Right lobe of liver (tissue), 6 donors: ENCODE measurements at regions of chr1 and their contacts with region 1.

Region 1: GRCh38 chr1:205273551-205273982 is 45.8 kb downstream of the TMCC2 start:
- DNase-seq: peak; percentile 84 to 89 (median 86)
- ATAC-seq: peak; percentile 91 to 95 (median 94)
- H3K4me3 ChIP-seq: no peak overlapping the region
- H3K27ac ChIP-seq: no peak overlapping the region
- H3K4me1 ChIP-seq: no peaks in the 10 kb centered on the region
- H3K27me3 ChIP-seq: no peaks in the 10 kb centered on the region
- CTCF ChIP-seq: peak; percentile 97 to 99 (median 98)
- POLR2A ChIP-seq: no peak

Region 2: GRCh38 chr1:205227584-205228006 is 46.0 kb before region 1 on chr1 and contains the start of gene TMCC2:
- intact Hi-C with region 1: no loop called
- DNase-seq: peak; percentile 75 to 84 (median 82)
- ATAC-seq: peak; percentile 89 to 92 (median 92)
- H3K4me3 ChIP-seq: peak within 1 kb of the TSS; percentile 34 to 52 (median 51)
- H3K27ac ChIP-seq: no peak within 1 kb of the TSS
- H3K4me1 ChIP-seq: peaks cover 0 to 9% (median 0%) of the 10 kb centered on the region in 4 donors
- H3K27me3 ChIP-seq: no peaks in the 10 kb centered on the region
- CTCF ChIP-seq: no peak
- POLR2A ChIP-seq: no peak
- total RNA-seq, gene TMCC2: 0.14 to 5.9 (median 0.30) TPM

Region 3: GRCh38 chr1:205313563-205314308 is 40.2 kb after region 1 on chr1:
- intact Hi-C with region 1: loop called in 1 of 2 experiments (anchors 5 kb)
- DNase-seq: peak in 2 of 3 donors; percentile 43 to 66
- ATAC-seq: peak; percentile 19 to 37 (median 28)
- H3K4me3 ChIP-seq: peak overlapping the region in 1 of 3 donors; percentile 1
- H3K27ac ChIP-seq: peak overlapping the region in 2 of 3 donors; percentile 66 to 70
- H3K4me1 ChIP-seq: peaks cover 0 to 77% (median 18%) of the 10 kb centered on the region in 4 donors
- H3K27me3 ChIP-seq: no peaks in the 10 kb centered on the region
- CTCF ChIP-seq: no peak
- POLR2A ChIP-seq: no peak

Region 4: DNA sequence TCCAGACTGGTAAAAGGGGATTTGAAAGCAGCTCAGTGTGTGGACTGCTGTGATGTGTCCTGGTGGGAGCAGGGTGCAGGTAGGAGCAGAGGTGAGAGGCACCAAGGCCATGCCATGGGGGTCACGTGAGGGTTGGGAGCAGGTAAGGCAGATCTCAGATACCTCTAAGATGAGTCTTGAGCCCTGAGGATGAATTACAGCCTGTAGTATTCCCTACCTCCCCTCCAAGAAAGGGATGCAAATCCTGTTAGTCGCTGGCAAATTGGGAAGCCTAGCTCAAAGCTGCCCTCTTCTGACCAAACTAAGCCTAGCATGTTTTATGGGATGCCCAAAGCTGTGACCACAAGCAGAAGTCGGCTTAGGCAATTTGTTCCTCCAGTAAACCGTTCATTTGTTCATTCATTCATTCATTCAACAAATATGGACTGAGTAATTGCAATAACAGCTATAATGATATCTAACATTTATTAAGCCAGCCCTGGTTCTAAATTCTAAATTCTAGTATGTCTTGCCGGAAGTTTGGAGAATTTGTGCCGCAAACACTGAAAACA is 51.8 kb after region 1 on chr1:
- intact Hi-C with region 1: loop called (anchors 2 to 5 kb)
- DNase-seq: peak in 1 of 3 donors; percentile 64
- ATAC-seq: peak; percentile 41 to 55 (median 48)
- H3K4me3 ChIP-seq: no peak overlapping the region
- H3K27ac ChIP-seq: no peak overlapping the region
- H3K4me1 ChIP-seq: peaks cover 0 to 14% (median 0%) of the 10 kb centered on the region in 4 donors
- H3K27me3 ChIP-seq: no peaks in the 10 kb centered on the region
- CTCF ChIP-seq: peak; percentile 81 to 84 (median 84)
- POLR2A ChIP-seq: no peak

Region 5: DNA sequence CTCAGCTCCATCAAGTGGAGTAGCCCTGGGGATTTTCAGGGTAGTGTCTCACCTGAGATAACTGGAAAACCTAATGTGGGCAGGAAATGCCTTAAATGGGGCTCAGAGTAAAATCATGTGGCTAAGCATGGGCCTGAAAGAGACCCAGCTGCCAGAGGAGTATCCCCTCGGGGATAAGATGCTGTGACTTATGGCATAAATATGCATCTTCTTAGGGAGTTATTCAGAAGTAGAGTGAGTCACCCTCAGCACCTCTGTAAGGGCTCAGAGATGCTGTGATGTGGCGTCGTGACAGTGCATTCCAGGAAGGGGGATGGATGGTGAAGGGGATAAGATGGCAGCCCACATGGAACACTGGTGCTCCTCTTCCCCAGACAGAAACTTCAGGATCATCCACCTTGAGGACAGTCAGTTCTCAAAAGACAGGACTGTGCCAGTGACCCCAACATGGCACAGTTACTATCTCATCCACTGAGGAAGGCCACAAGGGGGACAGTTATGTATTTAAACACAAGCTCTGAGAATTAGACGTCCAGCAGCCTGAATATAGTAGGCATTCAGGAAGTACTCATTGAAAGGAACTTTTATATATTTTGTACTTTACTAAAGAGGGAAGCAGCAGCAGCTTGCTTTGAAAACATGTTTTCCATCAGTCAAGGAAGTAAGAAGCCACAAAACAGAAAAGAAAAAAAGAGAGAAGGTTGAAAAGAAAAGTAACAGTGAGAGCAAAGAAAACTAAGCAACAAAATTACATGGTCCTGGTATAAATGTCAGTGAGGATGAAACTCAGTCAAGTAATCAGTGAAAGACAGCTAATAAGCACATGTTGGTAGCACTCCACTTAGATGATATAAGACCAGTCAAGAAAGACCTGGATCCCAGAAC is 1632.0 kb after region 1 on chr1:
- intact Hi-C with region 1: no loop called
- DNase-seq: no peak
- ATAC-seq: no peak
- H3K4me3 ChIP-seq: no peak overlapping the region
- H3K27ac ChIP-seq: no peak overlapping the region
- H3K4me1 ChIP-seq: peaks cover 0 to 10% (median 0%) of the 10 kb centered on the region in 4 donors
- H3K27me3 ChIP-seq: no peaks in the 10 kb centered on the region
- CTCF ChIP-seq: no peak
- POLR2A ChIP-seq: no peak